Activated CD4-positive, alpha-beta T cell treated with anti-CD3 and anti-CD28 coated beads, Interleukin-2, amount 10 ng/mL, durations not matched to agents 7 days and 5 days (primary cell): ENCODE measurements at regions of chr17 and their contacts with region 1.

Region 1: GRCh38 chr17:50200457-50201275 is 765 bp downstream of the COL1A1 start:
- DNase-seq: peak; percentile 84
- H3K4me3 Mint-ChIP-seq: peak overlapping the region; percentile 64
- H3K27ac Mint-ChIP-seq: peak overlapping the region; percentile 9
- H3K4me1 Mint-ChIP-seq: peaks cover 22% of the 10 kb centered on the region
- H3K27me3 Mint-ChIP-seq: peaks cover 57% of the 10 kb centered on the region

Region 2: GRCh38 chr17:50169121-50169764 is 31.4 kb before region 1 on chr17:
- CTCF ChIA-PET with region 1: interaction called, 10 read pairs
- POLR2A ChIA-PET with region 1: no interaction called
- DNase-seq: peak; percentile 59
- H3K4me3 Mint-ChIP-seq: no peak overlapping the region
- H3K27ac Mint-ChIP-seq: peak overlapping the region; percentile 27
- H3K4me1 Mint-ChIP-seq: peaks cover 17% of the 10 kb centered on the region
- H3K27me3 Mint-ChIP-seq: no peaks in the 10 kb centered on the region

Region 3: GRCh38 chr17:50213026-50214022 is 12.7 kb after region 1 on chr17:
- CTCF ChIA-PET with region 1: interaction called, 26 read pairs
- POLR2A ChIA-PET with region 1: no interaction called
- DNase-seq: peak; percentile 23
- H3K4me3 Mint-ChIP-seq: no peak overlapping the region
- H3K27ac Mint-ChIP-seq: no peak overlapping the region
- H3K4me1 Mint-ChIP-seq: peaks cover 5% of the 10 kb centered on the region
- H3K27me3 Mint-ChIP-seq: peaks cover 29% of the 10 kb centered on the region

Region 4: GRCh38 chr17:50269477-50270434 is 69.1 kb after region 1 on chr17:
- CTCF ChIA-PET with region 1: interaction called, 27 read pairs
- POLR2A ChIA-PET with region 1: no interaction called
- DNase-seq: peak; percentile 79
- H3K4me3 Mint-ChIP-seq: no peak overlapping the region
- H3K27ac Mint-ChIP-seq: no peak overlapping the region
- H3K4me1 Mint-ChIP-seq: peaks cover 19% of the 10 kb centered on the region
- H3K27me3 Mint-ChIP-seq: peaks cover 21% of the 10 kb centered on the region

Region 5: DNA sequence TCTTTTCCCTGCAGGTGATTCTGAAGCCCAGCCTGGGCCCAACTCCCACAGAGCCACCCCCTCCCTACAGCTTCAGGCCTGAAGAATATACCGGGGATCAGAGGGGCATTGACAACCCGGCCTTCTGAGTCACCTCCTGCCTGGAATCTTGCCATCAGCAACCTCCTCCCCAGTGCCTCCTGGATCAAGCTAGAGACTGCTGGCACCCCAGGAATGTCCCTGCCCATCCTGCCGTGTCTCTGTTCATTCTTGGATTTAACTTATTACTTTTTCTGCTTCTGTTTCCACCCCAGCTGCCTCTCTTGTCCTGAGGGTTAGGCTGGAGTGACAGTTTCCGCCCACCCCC is 78.5 kb after region 1 on chr17:
- CTCF ChIA-PET with region 1: interaction called, 22 read pairs
- POLR2A ChIA-PET with region 1: no interaction called
- DNase-seq: no peak
- H3K4me3 Mint-ChIP-seq: no peak overlapping the region
- H3K27ac Mint-ChIP-seq: no peak overlapping the region
- H3K4me1 Mint-ChIP-seq: peaks cover 23% of the 10 kb centered on the region
- H3K27me3 Mint-ChIP-seq: peaks cover 26% of the 10 kb centered on the region

Region 6: GRCh38 chr17:50297407-50297865 is 96.8 kb after region 1 on chr17:
- CTCF ChIA-PET with region 1: interaction called, 133 read pairs
- POLR2A ChIA-PET with region 1: no interaction called
- DNase-seq: peak; percentile 84
- H3K4me3 Mint-ChIP-seq: no peak overlapping the region
- H3K27ac Mint-ChIP-seq: no peak overlapping the region
- H3K4me1 Mint-ChIP-seq: peaks cover 6% of the 10 kb centered on the region
- H3K27me3 Mint-ChIP-seq: peaks cover 4% of the 10 kb centered on the region